BJ (cell line): ENCODE measurements at regions of chr2 and their contacts with region 1.

Region 1: DNA sequence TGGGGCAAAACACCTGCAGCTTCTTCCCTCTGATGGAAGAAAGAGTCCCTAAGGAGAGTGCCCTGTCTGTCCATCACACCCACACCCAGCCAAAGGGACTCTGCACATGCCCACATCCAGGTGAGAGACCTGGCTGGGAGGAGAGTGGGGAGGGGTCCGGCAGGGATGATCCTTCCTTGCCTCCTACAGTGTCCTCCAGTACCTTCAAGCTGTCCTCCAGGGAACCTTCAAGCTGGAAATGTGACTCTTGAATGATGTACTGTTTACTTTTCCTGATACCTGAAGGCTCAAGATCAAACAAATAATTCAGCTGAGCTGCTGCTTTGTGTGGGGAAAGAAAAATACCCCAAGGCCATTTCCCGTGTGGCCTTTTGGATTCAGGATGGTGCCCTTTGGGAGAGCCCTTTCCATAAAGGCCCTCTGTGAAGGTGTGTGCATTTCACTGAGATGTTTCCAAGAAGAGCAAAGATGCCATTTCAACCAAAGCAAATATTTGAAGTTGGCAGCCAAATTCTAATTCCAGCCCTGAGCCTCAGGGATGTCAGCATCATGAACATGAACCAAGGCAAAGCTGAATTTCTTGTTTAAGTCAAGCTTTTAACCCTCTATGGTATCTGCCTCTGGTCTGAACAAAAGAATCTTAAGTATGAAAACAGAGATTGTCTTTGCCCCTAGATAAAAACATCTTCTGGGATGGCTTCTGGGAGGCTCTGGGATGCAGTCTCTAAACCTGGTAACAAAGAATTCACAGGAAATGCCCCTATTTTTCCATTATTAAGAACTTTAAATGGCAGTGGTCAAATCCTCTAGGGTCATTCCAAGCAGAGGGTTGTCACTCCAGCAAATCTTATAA is 11.1 kb downstream of the EVA1A start:
- DNase-seq: no peak
- H3K4me3 ChIP-seq: no peak overlapping the region
- H3K27me3 ChIP-seq: no peaks in the 10 kb centered on the region
- CTCF ChIP-seq: no peak

Region 2: GRCh38 chr2:75432761-75433361 is 116.8 kb before region 1 on chr2:
- CTCF ChIA-PET with region 1: no interaction called
- POLR2A ChIA-PET with region 1: no interaction called
- DNase-seq: no peak
- H3K4me3 ChIP-seq: no peak overlapping the region
- H3K27me3 ChIP-seq: peaks cover 6% of the 10 kb centered on the region
- CTCF ChIP-seq: no peak

Region 3: DNA sequence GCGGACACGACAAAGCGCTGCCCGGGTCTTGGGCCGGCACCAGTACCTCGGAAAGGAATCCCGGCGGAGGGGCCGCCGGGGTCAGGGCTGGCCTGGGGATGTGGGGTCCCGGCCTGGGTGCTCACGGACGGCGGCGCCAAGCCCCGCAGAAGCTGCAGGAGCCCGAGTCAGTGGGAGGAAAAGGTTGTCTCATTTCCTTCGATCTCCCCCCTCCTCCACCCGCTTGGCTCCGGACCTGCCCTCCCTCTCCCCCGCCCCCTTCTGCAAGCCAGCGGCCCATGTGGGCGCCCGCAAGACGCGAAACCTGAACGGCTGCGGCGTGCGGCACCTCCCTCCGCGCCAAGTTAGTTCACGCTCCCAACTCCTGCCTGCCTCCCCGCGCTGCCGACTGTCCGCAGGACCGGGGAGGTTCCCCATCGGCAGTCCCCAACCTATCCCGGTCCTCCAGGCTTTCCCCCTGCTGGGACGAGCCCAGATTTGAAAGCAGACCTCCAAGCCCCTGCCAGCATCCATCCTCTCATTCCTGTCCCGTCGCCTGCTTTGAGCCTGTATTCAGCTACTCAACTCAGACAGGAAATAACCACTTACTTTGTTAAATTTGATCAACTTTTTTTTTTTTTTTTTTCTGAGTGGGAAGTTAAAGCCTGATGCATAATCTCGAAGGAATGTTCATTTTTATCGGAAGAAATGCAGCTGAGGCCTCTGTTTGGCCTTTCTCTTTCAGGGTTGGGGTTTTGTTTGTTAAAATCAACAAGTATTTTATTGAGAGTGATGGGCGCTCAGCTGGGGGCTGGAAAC is 11.3 kb after region 1 on chr2 and contains the start of gene EVA1A:
- CTCF ChIA-PET with region 1: interaction called, 17 read pairs
- POLR2A ChIA-PET with region 1: no interaction called
- DNase-seq: peak; percentile 39
- H3K4me3 ChIP-seq: peak within 1 kb of the TSS; percentile 78
- H3K27me3 ChIP-seq: no peaks in the 10 kb centered on the region
- CTCF ChIP-seq: no peak
- polyA plus RNA-seq, gene EVA1A: 30.2 and 41.0 TPM in 2 replicates